Dorsolateral prefrontal cortex (tissue), 120 donors: ENCODE measurements at regions of chr2 and their contacts with region 1.

Region 1: DNA sequence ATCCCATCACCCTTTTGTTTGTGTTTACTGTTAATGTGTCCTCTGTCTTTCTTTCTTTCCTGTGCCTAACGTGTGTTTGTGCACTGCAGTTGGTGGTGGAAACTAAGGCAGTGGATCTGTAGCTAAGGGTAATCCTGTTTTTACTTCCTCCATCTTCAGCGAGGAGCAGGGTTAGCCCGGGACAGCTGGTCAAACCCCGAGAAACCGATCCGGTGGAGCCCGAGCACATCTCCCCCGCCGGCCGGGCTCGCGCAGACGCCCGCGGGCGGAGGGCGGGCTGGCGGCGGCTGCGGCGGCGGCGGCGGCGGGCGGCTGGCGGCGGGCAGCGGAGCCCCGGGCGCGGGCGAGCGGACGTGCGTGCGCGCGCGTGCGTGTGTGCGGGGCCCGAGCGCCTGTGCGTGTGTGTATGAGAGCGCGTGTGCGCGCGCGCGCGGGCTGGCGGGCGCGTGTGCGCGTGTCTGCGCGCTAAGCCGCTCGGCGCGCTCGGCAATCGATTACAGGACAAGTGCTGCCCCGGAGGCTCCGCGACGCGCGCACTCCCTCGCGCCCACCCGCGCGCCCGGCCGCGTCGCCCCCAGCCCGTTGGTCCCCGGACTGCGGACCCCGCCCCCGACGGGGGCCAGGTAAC is at the start of gene IKZF2:
- DNase-seq: peak; percentile 62 to 89 (median 82)
- H3K4me3 ChIP-seq: peak within 1 kb of the TSS; percentile 67 to 96 (median 83)
- H3K27ac ChIP-seq: peak within 1 kb of the TSS; percentile 75 to 98 (median 94)
- H3K27me3 ChIP-seq: no peaks in the 10 kb centered on the region
- CTCF ChIP-seq: no peak
- total RNA-seq, gene IKZF2: 9.0 to 49.6 (median 21.1) TPM

Region 2: DNA sequence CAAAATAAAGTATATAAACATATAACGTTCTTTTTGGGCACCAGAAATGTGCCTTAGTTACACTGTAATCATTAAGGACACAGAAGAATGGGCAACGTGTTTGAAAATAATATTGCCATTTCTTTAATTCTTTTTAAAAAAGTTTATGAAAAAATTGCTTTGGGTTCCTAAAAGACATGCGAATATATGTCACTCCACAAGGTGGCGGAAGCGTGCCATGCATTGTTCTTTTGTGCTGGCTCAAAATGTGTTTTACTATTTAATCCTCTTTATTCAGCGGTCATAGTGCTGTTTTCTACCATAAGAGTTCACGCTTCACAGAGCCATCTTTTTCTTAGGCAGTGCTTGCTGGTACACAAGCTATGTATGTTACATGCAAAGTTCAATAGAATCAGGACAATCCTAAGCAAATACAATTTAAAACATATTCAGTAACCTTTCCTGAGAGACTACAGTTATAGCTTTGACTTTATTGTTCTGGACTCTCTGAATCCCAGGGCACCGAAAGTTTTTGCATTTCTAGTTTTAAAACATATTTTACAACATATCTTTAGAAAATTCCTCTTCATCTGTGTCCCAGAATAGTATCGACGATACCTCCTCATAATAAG is 465.2 kb before region 1 on chr2:
- intact Hi-C with region 1: loop called (anchors 2 to 5 kb)
- DNase-seq: peak in 9 of 10 donors; percentile 20 to 70 (median 55)
- H3K4me3 ChIP-seq: peak overlapping the region in 25 of 59 donors; percentile 1 to 42 (median 23)
- H3K27ac ChIP-seq: no peak overlapping the region
- H3K27me3 ChIP-seq: no peaks in the 10 kb centered on the region
- CTCF ChIP-seq: peak; percentile 75 to 99 (median 89)

Region 3: DNA sequence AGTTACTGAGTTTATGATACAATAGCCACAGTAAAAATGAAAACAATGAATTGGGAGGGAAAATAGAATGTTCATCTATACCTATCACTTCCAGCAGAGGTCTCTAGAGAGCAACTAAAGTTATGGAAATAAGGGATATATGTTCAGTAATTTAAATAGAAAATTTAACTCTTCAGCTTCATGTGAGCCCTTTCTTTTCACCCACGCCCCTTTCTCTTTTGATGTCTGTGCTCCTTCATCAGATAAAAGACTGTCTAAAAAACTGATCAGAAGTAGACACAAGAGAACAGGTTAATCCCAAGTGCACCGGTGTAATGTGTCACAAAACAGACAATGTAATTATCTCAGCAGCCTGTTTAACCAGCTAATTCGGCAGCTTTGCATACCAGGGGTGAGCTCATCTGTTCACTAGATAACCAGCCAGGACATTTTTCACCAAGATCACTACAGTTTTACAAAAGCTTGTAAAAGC is 374.5 kb before region 1 on chr2:
- intact Hi-C with region 1: loop called (anchors 2 to 5 kb)
- DNase-seq: no peak
- H3K4me3 ChIP-seq: peak overlapping the region in 6 of 59 donors; percentile 14 to 36 (median 20)
- H3K27ac ChIP-seq: no peak overlapping the region
- H3K27me3 ChIP-seq: no peaks in the 10 kb centered on the region
- CTCF ChIP-seq: peak in 55 of 56 donors; percentile 48 to 83 (median 71)

Region 4: GRCh38 chr2:213104092-213104902 is 47.3 kb before region 1 on chr2:
- intact Hi-C with region 1: no loop called
- DNase-seq: no peak
- H3K4me3 ChIP-seq: no peak overlapping the region
- H3K27ac ChIP-seq: no peak overlapping the region
- H3K27me3 ChIP-seq: no peaks in the 10 kb centered on the region
- CTCF ChIP-seq: no peak

Region 5: DNA sequence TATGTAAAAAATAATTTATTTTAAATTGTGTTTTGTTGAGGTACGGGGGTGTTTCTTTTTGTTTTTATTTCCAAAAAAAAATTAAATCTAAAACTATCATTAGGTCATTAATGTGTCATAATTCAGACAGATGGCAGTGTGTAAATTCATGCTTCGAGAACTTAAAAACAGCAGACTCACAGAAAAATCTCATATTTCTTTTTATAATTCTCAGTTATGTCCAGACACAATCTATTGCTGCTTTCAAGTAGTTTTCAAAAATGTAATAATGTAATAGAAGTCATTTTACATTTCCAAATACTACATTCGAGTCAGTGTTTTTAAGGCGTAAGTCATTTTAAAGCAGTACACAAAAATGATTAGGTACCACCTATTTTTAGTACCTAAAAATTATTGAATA is 14.5 kb before region 1 on chr2:
- intact Hi-C with region 1: no loop called
- DNase-seq: no peak
- H3K4me3 ChIP-seq: no peak overlapping the region
- H3K27ac ChIP-seq: no peak overlapping the region
- H3K27me3 ChIP-seq: no peaks in the 10 kb centered on the region
- CTCF ChIP-seq: no peak

Region 6: DNA sequence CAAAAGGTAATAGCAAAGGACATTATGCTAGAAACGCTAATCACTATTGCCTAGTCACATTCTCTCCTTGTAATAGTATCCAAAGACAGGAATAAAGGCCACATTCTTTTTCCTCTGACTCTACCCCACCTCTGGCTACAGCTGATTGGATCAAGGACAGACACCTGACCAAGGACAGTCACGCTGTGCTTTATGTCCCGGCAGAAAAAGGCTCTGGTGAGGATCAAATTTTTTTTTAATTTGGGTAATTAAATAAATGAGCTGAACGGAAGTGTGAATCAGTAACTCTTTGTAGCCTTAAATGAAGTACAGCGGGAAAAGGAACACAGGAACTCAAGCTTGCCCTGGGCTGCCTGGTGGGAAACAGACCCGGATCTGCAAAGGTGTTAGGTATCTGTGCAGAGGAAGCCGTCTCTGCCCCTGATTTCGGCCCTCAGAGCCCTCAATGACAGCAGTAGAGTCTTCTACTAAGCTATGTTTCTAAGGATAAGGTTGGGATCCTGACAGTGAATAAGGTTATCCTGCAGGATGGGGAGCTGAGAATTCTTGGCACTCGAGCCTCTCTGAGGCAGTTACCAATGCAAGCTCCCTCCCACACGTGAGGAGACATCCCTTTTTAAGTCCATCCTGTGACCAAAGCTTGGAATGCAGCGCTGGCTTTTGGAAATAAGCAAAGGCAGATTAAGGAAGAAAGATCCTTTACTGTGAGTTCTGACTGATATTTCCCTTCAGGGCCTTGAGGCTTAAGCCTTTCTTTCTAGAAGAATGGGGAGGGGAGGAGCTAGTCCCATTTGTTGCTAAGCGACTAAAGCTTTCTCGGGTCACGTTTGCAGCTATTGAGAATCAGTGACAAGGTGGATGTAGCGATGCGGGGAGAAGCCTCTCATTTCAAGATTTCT is 37.7 kb after region 1 on chr2:
- intact Hi-C with region 1: no loop called
- DNase-seq: peak in 1 of 10 donors; percentile 14
- H3K4me3 ChIP-seq: peak overlapping the region in 14 of 59 donors; percentile 4 to 36 (median 14)
- H3K27ac ChIP-seq: no peak overlapping the region
- H3K27me3 ChIP-seq: no peaks in the 10 kb centered on the region
- CTCF ChIP-seq: no peak